ENCODE measurements at regions of chr15 and their contacts with region 1.

Region 1: GRCh38 chr15:73950831-73951561 is 24.7 kb downstream of the LOXL1 start:
- DNase-seq: peak; percentile 95

Region 2: DNA sequence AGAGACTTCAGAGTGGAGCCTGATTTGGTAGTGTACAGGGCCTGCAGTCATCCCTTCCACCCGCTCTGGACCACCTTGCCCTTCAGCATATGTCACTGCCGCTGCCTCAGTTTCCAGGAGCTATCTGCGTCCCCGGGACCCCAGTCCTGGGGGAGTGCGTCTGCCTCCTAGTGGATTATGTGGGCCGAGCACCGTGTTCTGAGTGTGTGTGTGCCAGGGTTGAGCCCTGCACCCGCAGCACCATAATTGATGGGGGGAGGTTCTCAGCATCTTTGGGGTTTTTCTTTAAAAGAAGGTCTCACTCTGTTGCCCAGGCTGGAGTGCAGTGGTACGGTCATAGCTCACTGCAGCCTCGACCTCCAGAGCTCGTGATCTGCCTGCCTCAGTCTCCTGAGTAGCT is 233.2 kb before region 1 on chr15:
- intact Hi-C with region 1: no loop called
- DNase-seq: no peak

Region 3: GRCh38 chr15:73921254-73921925 is 29.6 kb before region 1 on chr15:
- intact Hi-C with region 1: no loop called
- DNase-seq: no peak

Region 4: DNA sequence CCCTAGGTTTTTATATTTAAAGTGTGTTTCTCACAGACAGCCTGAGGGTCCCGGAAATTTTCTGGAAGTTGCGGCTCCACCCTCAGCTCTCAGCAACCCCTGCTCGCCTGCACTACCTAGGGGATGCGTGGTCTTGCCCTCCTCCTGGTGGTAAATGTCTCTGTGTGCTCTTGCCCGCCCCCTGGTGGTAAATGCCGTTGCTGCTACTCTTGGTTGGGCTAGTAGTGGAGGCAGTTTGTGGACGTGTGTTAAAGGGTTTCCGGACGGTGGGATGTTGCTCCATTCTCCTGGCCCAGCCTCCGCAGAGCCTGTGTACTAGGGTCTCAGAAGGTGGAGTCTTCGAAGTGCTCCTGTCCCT is 13.7 kb after region 1 on chr15:
- intact Hi-C with region 1: loop called (anchors 1 kb)
- DNase-seq: peak; percentile 84

Region 5: DNA sequence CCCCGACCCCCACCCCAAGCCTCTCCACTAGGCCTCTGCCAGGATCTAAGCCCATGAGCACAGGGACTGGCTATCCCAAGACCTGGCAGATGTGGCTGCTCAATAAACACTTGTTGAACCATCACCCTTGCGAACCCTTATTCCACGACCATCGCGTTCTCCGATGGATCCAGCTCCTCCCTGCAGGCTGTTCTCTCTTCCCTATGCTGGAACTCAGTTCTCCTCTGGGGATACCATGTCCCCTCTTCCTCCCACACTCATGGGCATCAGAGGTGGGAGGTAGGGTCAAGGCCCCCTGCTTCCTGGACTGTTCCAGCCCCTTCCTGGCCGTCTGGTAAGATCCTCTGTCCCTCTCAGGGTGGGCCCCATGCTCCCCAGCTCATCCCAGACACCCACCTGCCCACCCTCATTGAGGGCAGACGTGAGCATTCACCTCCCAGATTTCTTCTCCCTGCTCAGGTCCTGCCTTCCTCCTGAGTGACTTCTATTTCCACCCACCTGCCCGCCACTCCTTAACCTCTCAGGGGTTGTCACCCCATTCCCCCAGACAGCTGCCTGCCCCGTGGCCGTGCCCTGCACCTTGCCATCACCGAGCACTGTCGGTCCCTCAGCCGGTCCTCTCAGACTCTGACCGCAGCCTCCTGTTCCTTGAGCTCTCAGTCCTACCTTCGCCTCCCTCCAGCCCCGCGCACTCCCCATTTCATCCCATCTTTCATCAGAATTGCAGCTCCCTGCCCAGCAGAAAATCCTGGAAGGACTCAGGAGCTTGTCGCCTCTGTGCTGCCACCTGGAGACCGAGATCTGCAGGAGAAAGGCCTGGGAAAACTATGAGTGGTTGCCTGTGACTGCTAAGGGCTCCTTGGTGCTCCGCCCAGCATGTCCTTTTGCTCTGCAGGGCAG is 85.5 kb after region 1 on chr15:
- intact Hi-C with region 1: no loop called
- DNase-seq: no peak